Dorsolateral prefrontal cortex (tissue), 120 donors: ENCODE measurements at regions of chr9 and their contacts with region 1.

Region 1: DNA sequence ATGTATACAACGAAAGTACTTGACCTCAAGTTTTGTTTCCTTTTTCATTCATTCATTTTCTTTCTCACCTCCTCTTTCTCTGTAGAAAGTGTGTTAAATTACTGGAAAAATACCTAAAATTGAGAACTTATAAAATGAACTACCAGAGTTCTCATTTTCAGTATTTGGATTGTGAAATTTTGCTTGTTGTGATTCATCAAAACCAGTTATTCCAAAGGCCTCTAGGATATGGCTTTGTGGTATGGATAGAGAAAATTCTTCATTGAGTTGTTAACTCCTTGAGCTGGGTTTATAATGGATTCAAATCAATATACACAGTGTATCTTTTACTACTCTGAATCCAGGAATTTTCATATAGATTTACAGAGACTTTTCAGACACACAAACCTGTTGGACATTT is 287.6 kb downstream of the KDM4C start:
- DNase-seq: no peak
- H3K4me3 ChIP-seq: no peak overlapping the region
- H3K27ac ChIP-seq: no peak overlapping the region
- H3K27me3 ChIP-seq: no peaks in the 10 kb centered on the region
- CTCF ChIP-seq: no peak

Region 2: DNA sequence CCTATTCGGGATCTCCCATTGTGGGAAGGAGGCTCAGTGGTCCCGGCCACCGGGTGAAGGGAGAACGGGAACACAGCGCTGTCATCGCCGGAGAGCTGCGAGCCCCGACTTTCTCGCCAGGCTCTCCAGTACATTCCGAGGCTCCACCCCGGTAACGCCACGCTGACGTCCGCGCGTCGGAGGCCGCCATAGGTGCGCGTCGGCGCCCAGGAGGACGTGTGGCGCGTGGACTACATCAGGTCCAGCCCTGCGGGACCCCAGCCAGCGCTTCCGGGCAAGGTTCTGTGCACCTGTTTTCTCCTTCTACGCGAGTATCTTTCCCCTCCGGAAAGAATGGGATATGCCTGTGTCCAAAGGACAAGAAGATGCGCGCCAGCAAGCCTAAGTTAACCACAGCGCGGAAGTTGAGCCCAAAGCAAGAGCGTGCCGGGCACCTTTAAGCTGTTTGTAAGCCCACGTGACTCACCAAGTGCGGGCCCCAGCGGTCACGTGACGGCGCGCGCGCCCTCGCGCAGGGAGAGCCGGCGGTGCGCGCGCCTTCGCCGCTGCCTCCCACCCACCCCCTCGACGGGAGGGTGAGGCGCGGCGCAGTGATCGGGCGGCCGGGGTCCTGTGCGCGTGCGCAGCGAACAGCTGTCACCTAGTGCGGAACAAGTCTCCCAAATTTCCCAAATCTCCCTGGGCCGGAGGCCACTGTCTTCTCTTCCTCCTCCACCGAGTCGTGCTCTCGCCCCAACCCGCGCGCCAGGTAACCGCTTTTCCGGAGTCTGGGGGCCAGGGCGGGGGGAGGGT is 287.7 kb before region 1 on chr9 and contains the start of gene KDM4C:
- intact Hi-C with region 1: no loop called
- DNase-seq: peak; percentile 89 to 96 (median 94)
- H3K4me3 ChIP-seq: peak within 1 kb of the TSS; percentile 61 to 100 (median 94)
- H3K27ac ChIP-seq: peak within 1 kb of the TSS; percentile 53 to 100 (median 98)
- H3K27me3 ChIP-seq: no peaks in the 10 kb centered on the region
- CTCF ChIP-seq: peak in 10 of 56 donors; percentile 9 to 33 (median 20)
- total RNA-seq, gene KDM4C: 44.2 to 96.0 (median 66.5) TPM

Region 3: GRCh38 chr9:6907772-6908381 is 137.5 kb before region 1 on chr9:
- intact Hi-C with region 1: loop called in 1 of 2 experiments (anchors 10 kb)
- DNase-seq: no peak
- H3K4me3 ChIP-seq: no peak overlapping the region
- H3K27ac ChIP-seq: peak overlapping the region in 1 of 59 donors; percentile 70
- H3K27me3 ChIP-seq: no peaks in the 10 kb centered on the region
- CTCF ChIP-seq: peak; percentile 47 to 93 (median 70)

Region 4: DNA sequence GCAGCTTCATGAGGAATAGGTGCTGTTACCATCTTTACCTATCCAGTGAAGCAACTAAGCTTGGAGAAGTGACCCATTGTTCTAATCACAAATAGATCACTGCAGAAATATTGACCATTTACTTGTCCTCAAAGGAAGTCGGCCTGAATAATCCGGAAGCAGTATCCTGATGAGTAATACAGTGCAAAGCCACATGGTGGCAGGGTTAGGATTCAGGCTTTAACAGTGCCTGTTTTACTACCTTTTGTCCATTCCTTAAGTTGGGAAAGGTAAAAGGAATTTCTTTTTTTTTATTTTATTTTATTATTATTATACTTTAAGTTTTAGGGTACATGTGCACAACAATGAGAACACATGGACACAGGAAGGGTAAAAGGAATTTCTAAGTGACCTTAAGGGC is 48.7 kb after region 1 on chr9:
- intact Hi-C with region 1: no loop called
- DNase-seq: peak in 1 of 10 donors; percentile 15
- H3K4me3 ChIP-seq: no peak overlapping the region
- H3K27ac ChIP-seq: no peak overlapping the region
- H3K27me3 ChIP-seq: no peaks in the 10 kb centered on the region
- CTCF ChIP-seq: peak in 48 of 56 donors; percentile 17 to 58 (median 38)